A549 (cell line): ENCODE measurements at regions of chr10 and their contacts with region 1.

Region 1: GRCh38 chr10:70925377-70926225 is 37.2 kb upstream of the PCBD1 start:
- DNase-seq: peak in 1 of 2 experiments; percentile 49
- ATAC-seq: peak; percentile 76 to 92
- H3K4me3 ChIP-seq: no peak overlapping the region
- H3K27ac ChIP-seq: no peak overlapping the region
- H3K4me1 ChIP-seq: no peaks in the 10 kb centered on the region
- CTCF ChIP-seq: peak; percentile 90
- EP300 ChIP-seq: no peak
- POLR2A ChIP-seq: no peak
- RAD21 ChIP-seq: peak; percentile 82 to 91

Region 2: DNA sequence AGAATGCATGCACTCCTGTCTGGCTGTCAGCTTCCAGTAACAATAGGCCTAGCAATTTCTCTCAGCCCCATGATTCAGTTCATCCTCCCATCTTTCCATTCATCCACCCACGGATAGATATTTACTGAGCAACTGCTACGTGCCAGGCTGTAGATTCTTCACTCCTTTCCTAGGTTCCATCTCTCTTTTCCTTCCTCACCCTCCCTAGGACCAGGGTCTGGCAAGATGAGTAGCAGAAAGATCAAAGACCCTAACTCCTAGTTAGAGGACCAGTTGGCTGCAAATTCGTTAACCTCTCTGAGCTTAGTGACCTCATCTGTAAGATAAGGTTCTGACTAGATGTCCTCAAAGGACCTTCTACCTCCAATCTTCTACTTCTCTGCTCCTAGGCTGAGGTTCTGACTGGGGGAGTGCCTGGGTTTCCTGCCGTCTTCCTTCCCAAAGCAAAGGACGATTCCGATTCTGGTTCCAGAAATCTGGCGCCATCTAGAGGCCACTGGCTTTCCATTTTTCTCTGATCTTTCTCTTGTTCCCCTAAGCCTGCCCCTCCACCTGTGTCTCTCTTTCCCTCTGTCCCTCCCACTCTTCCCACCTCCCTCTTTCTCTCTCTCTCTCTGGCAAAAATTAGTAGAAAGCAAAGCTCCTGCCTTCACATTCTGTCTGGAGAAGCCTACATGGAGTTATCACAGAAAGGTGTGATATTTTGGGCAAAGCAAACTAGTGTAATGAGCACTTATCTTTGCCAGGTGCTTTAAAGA is 166.7 kb before region 1 on chr10:
- CTCF ChIA-PET with region 1: no interaction called
- POLR2A ChIA-PET with region 1: no interaction called
- DNase-seq: peak; percentile 59 to 67
- ATAC-seq: peak; percentile 45 to 80
- H3K4me3 ChIP-seq: no peak overlapping the region
- H3K27ac ChIP-seq: no peak overlapping the region
- H3K4me1 ChIP-seq: 0 out of 3 replicates have a peak, but pooled peaks cover 5% of the 10 kb centered on the region
- CTCF ChIP-seq: peak; percentile 75
- EP300 ChIP-seq: no peak
- POLR2A ChIP-seq: no peak
- RAD21 ChIP-seq: peak; percentile 71 to 81

Region 3: GRCh38 chr10:70803775-70804420 is 121.7 kb before region 1 on chr10:
- CTCF ChIA-PET with region 1: no interaction called
- POLR2A ChIA-PET with region 1: no interaction called
- DNase-seq: no peak
- ATAC-seq: no peak
- H3K4me3 ChIP-seq: no peak overlapping the region
- H3K27ac ChIP-seq: no peak overlapping the region
- H3K4me1 ChIP-seq: peaks cover 5% of the 10 kb centered on the region; the same call in 1 of the 3 replicates
- CTCF ChIP-seq: no peak
- EP300 ChIP-seq: no peak
- POLR2A ChIP-seq: no peak
- RAD21 ChIP-seq: no peak

Region 4: GRCh38 chr10:70893227-70894006 is 32.2 kb before region 1 on chr10:
- CTCF ChIA-PET with region 1: interaction called, 10 read pairs
- POLR2A ChIA-PET with region 1: no interaction called
- DNase-seq: no peak
- ATAC-seq: no peak
- H3K4me3 ChIP-seq: no peak overlapping the region
- H3K27ac ChIP-seq: no peak overlapping the region
- H3K4me1 ChIP-seq: peaks cover 12% of the 10 kb centered on the region
- CTCF ChIP-seq: no peak
- EP300 ChIP-seq: no peak
- POLR2A ChIP-seq: no peak
- RAD21 ChIP-seq: no peak

Region 5: GRCh38 chr10:70940834-70941568 is 15.4 kb after region 1 on chr10:
- CTCF ChIA-PET with region 1: interaction called, 46 read pairs
- POLR2A ChIA-PET with region 1: no interaction called
- DNase-seq: no peak
- ATAC-seq: no peak
- H3K4me3 ChIP-seq: no peak overlapping the region
- H3K27ac ChIP-seq: no peak overlapping the region
- H3K4me1 ChIP-seq: no peaks in the 10 kb centered on the region
- CTCF ChIP-seq: no peak
- EP300 ChIP-seq: no peak
- POLR2A ChIP-seq: no peak
- RAD21 ChIP-seq: no peak

Region 6: GRCh38 chr10:71010730-71011129 is 85.1 kb after region 1 on chr10:
- CTCF ChIA-PET with region 1: interaction called, 16 read pairs
- POLR2A ChIA-PET with region 1: no interaction called
- DNase-seq: no peak
- ATAC-seq: no peak
- H3K4me3 ChIP-seq: no peak overlapping the region
- H3K27ac ChIP-seq: no peak overlapping the region
- H3K4me1 ChIP-seq: no peaks in the 10 kb centered on the region
- CTCF ChIP-seq: no peak
- EP300 ChIP-seq: no peak
- POLR2A ChIP-seq: no peak
- RAD21 ChIP-seq: no peak

Region 7: DNA sequence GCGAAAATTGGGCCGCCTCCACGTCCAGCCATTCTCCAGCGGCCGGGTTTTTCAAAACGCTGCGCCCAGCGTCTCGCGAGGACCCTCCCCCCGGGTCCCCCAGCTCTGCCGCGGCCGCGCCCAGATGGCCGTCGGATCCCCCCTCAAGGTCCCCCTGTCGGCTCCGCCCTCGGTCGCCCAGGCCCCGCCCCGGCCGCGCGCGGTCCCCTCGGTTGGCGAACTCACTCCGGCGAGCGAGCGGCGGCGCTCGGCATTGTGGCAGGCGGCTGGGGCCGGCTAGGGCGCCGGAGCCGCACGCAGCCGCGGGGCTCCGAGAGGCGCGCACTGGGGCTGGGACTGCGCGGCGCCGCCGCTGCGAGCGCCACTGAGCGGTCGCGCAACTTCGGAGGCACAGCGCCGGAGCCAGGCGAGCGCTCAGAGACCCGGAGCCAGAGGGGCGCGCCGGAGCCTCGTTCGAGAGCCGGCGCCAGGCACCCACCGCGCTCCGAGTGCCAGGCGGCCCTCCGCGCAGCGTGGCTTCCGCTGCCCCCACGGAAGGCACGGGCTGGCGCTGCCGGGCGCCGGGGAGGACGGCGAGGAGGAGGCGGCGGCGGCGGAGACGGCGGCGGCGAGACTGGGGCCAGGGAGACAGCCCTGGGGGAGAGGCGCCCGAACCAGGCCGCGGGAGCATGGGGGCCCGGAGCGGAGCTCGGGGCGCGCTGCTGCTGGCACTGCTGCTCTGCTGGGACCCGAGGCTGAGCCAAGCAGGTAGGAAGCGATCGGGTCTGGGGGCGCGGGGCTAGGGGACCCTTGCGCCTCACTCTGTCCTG is 286.9 kb after region 1 on chr10 and contains the start of gene UNC5B:
- CTCF ChIA-PET with region 1: interaction called, 88 read pairs
- POLR2A ChIA-PET with region 1: no interaction called
- DNase-seq: peak; percentile 37 to 80
- ATAC-seq: peak; percentile 68 to 81
- H3K4me3 ChIP-seq: peak within 1 kb of the TSS; percentile 60
- H3K27ac ChIP-seq: peak within 1 kb of the TSS; percentile 31 to 79; a peak in 4 of 6 replicates
- H3K4me1 ChIP-seq: peaks cover 16% of the 10 kb centered on the region; the same call in 1 of the 3 replicates
- CTCF ChIP-seq: peak; percentile 25; the same call in 1 of the 3 replicates
- EP300 ChIP-seq: no peak
- POLR2A ChIP-seq: peak; percentile 64
- RAD21 ChIP-seq: no peak
- polyA plus RNA-seq, gene UNC5B: 1.0 and 1.3 TPM in 2 replicates

Region 8: GRCh38 chr10:71270301-71271220 is 345.0 kb after region 1 on chr10:
- CTCF ChIA-PET with region 1: interaction called, 67 read pairs
- POLR2A ChIA-PET with region 1: no interaction called
- DNase-seq: peak; percentile 72 to 91
- ATAC-seq: peak; percentile 80 to 90
- H3K4me3 ChIP-seq: no peak overlapping the region
- H3K27ac ChIP-seq: no peak overlapping the region
- H3K4me1 ChIP-seq: peaks cover 17% of the 10 kb centered on the region; the same call in 2 of the 3 replicates
- CTCF ChIP-seq: peak; percentile 62
- EP300 ChIP-seq: no peak
- POLR2A ChIP-seq: no peak
- RAD21 ChIP-seq: peak; percentile 32 to 45; a peak in 4 of 5 replicates

Region 9: GRCh38 chr10:71343392-71343773 is 417.8 kb after region 1 on chr10:
- CTCF ChIA-PET with region 1: no interaction called
- POLR2A ChIA-PET with region 1: no interaction called
- DNase-seq: peak; percentile 32 to 51
- ATAC-seq: peak in 1 of 2 experiments; percentile 55; a peak in 3 of 6 replicates
- H3K4me3 ChIP-seq: no peak overlapping the region
- H3K27ac ChIP-seq: peak overlapping the region; percentile 80 to 92
- H3K4me1 ChIP-seq: peaks cover 79% of the 10 kb centered on the region
- CTCF ChIP-seq: no peak
- EP300 ChIP-seq: peak in 1 of 2 experiments; percentile 39; a peak in 1 of 5 replicates
- POLR2A ChIP-seq: no peak
- RAD21 ChIP-seq: no peak